ENCODE measurements at regions of chr1 and their contacts with region 1.

Region 1: GRCh38 chr1:26771643-26772321 is 16.0 kb upstream of the PIGV start:
- DNase-seq: peak; percentile 89 to 90
- H3K4me3 ChIP-seq: no peak overlapping the region
- H3K27ac ChIP-seq: peak overlapping the region; percentile 79
- H3K4me1 ChIP-seq: peaks cover 41% of the 10 kb centered on the region
- H3K27me3 ChIP-seq: no peaks in the 10 kb centered on the region
- CTCF ChIP-seq: no peak

Region 2: GRCh38 chr1:26064591-26064990 is 707.2 kb before region 1 on chr1:
- CTCF ChIA-PET with region 1: no interaction called
- POLR2A ChIA-PET with region 1: no interaction called
- intact Hi-C with region 1: no loop called
- DNase-seq: peak; percentile 43 to 65
- H3K4me3 ChIP-seq: no peak overlapping the region
- H3K27ac ChIP-seq: no peak overlapping the region
- H3K4me1 ChIP-seq: peaks cover 7% of the 10 kb centered on the region; the same call in 1 of the 2 replicates
- H3K27me3 ChIP-seq: no peaks in the 10 kb centered on the region
- CTCF ChIP-seq: no peak

Region 3: DNA sequence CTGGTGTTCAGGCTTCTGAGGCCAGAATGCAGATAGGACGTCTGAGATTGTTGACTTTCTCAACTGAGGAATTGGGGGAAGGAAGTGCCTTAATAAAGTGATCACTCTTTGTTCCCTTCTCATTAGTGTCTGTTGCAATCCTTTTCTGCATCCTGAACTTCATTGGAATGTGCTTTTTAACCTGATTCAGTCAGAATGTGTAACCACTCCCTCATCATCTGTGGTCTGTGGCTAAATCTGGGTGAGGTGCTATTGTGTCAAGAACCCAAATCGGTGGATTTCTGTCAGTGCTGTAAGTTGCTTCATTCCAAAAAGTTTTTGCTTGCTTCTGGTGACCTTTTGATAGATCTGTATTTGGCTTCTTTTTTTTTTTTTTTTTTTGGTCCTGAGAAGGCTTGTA is 37.8 kb before region 1 on chr1:
- CTCF ChIA-PET with region 1: no interaction called
- POLR2A ChIA-PET with region 1: no interaction called
- intact Hi-C with region 1: loop called (anchors 5 kb)
- DNase-seq: peak; percentile 27 to 92
- H3K4me3 ChIP-seq: no peak overlapping the region; the same call in 1 of the 2 replicates
- H3K27ac ChIP-seq: peak overlapping the region; percentile 88
- H3K4me1 ChIP-seq: peaks cover 56% of the 10 kb centered on the region
- H3K27me3 ChIP-seq: no peaks in the 10 kb centered on the region
- CTCF ChIP-seq: no peak

Region 4: GRCh38 chr1:26744075-26744959 is 27.5 kb before region 1 on chr1:
- CTCF ChIA-PET with region 1: interaction called, 10 read pairs
- POLR2A ChIA-PET with region 1: no interaction called
- intact Hi-C with region 1: no loop called
- DNase-seq: no peak
- H3K4me3 ChIP-seq: no peak overlapping the region
- H3K27ac ChIP-seq: no peak overlapping the region
- H3K4me1 ChIP-seq: no peaks in the 10 kb centered on the region
- H3K27me3 ChIP-seq: no peaks in the 10 kb centered on the region
- CTCF ChIP-seq: no peak

Region 5: GRCh38 chr1:26787706-26788514 is 16.1 kb after region 1 on chr1 and contains the start of gene PIGV:
- CTCF ChIA-PET with region 1: interaction called, 3 read pairs
- POLR2A ChIA-PET with region 1: interaction called, 3 read pairs
- intact Hi-C with region 1: loop called (anchors 1 kb)
- DNase-seq: peak in 1 of 2 experiments; percentile 84
- H3K4me3 ChIP-seq: peak within 1 kb of the TSS; percentile 93
- H3K27ac ChIP-seq: peak within 1 kb of the TSS; percentile 92
- H3K4me1 ChIP-seq: peaks cover 52% of the 10 kb centered on the region
- H3K27me3 ChIP-seq: no peaks in the 10 kb centered on the region
- CTCF ChIP-seq: no peak
- total RNA-seq, gene PIGV: 30.8 and 31.9 TPM in 2 replicates

Measured in PC-9 (cell line).